ENCODE measurements at regions of chr17 and their contacts with region 1.

Region 1: DNA sequence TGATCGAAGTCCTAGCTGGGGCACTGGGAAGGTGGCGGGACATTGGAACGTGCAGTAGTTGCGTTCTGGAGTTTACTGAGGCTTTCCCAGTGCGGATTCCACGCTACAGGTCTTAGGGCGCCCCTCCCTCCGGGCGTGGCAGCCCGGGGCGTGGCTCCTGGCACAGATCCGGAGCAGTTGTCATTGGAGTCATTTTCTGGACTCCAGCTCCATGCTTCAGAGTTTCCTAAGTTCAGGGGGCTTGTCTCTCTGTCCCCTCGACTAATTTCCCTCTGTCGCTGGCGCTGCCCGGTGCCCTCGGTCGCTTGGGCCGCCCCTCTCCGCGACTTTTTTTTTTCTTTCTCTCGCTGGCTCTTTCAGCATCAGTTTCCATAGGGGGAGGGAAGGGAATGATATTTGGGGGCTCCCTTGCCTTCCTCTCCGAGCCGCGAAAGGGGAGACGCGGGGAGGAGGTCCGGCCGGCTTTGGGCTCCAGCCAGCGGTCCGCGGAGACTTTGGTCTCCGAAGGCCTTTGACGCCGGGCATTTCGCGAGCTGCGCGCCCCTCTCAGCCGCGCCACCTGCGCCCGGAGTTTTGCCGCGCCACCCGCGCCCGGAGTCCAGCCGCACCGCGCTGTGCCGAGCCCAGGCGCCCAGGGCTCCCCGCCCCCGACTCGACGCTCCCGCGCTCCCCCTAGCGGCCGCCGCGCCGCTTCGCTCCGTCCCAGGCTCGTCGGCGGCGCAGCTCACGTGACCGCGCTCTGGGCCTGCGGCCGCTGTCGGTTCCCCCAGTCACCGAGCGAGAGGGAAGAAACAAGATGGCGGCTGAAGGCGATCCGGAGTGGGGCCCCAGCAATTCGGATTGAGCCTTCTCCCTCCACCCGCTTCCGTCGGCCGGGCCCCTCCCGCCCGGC is at the start of gene BPTF:
- DNase-seq: peak; percentile 96
- ATAC-seq: peak; percentile 77
- H3K4me3 ChIP-seq: peak within 1 kb of the TSS; percentile 81 to 99 (median 82)
- H3K4me3 Mint-ChIP-seq: peak within 1 kb of the TSS; percentile 99
- H3K27ac ChIP-seq: peak within 1 kb of the TSS; percentile 80 to 89
- H3K27ac Mint-ChIP-seq: peak within 1 kb of the TSS; percentile 99
- H3K4me1 ChIP-seq: peaks cover 50 to 61% of the 10 kb centered on the region in 2 donors
- H3K4me1 Mint-ChIP-seq: peaks cover 58% of the 10 kb centered on the region
- H3K27me3 ChIP-seq: no peaks in the 10 kb centered on the region
- H3K27me3 Mint-ChIP-seq: no peaks in the 10 kb centered on the region
- CTCF ChIP-seq: peak; percentile 88
- total RNA-seq, gene BPTF: 376 and 390 TPM in 2 replicates

Region 2: GRCh38 chr17:67717624-67718329 is 107.2 kb before region 1 on chr17 and contains the start of gene NOL11:
- CTCF ChIA-PET with region 1: no interaction called
- POLR2A ChIA-PET with region 1: interaction called, 7 read pairs
- intact Hi-C with region 1: loop called (anchors 1 kb)
- DNase-seq: peak; percentile 100
- ATAC-seq: peak; percentile 95
- H3K4me3 ChIP-seq: peak within 1 kb of the TSS; percentile 70 to 97 (median 91)
- H3K4me3 Mint-ChIP-seq: peak within 1 kb of the TSS; percentile 98
- H3K27ac ChIP-seq: peak within 1 kb of the TSS; percentile 88 to 97
- H3K27ac Mint-ChIP-seq: peak within 1 kb of the TSS; percentile 97
- H3K4me1 ChIP-seq: peaks cover 18 to 21% of the 10 kb centered on the region in 2 donors
- H3K4me1 Mint-ChIP-seq: peaks cover 20% of the 10 kb centered on the region
- H3K27me3 ChIP-seq: no peaks in the 10 kb centered on the region
- H3K27me3 Mint-ChIP-seq: no peaks in the 10 kb centered on the region
- CTCF ChIP-seq: peak; percentile 86
- total RNA-seq, gene NOL11: 59.1 and 59.9 TPM in 2 replicates

Region 3: DNA sequence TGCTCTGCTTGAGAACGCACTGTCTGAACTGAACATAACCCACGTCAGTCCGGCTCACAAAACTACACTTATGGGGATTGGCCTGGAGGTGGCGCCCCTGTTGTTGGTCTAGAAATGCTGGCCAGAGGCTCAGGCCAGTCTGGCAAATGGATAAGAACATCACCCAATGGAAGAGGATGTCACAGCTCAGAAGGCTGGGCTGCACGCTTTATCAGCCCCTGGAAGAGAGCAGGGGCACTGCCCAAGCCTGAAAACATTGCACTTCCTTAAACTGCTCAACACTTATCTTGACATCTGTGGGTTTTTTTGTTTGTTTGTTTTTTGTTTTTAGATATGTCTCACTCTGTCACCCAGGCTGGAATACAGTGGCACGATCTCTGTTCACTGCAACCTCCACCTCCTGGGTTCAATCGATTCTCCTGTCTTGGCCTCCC is 24.5 kb before region 1 on chr17:
- CTCF ChIA-PET with region 1: interaction called, 103 read pairs
- POLR2A ChIA-PET with region 1: interaction called, 25 read pairs
- intact Hi-C with region 1: loop called (anchors 1 kb)
- DNase-seq: peak; percentile 87
- ATAC-seq: peak; percentile 94
- H3K4me3 ChIP-seq: no peak overlapping the region
- H3K4me3 Mint-ChIP-seq: peak overlapping the region; percentile 52
- H3K27ac ChIP-seq: no peak overlapping the region
- H3K27ac Mint-ChIP-seq: peak overlapping the region; percentile 80
- H3K4me1 ChIP-seq: peaks cover 9 to 11% of the 10 kb centered on the region in 2 donors
- H3K4me1 Mint-ChIP-seq: peaks cover 22% of the 10 kb centered on the region
- H3K27me3 ChIP-seq: no peaks in the 10 kb centered on the region
- H3K27me3 Mint-ChIP-seq: peaks cover 3% of the 10 kb centered on the region
- CTCF ChIP-seq: peak; percentile 73

Region 4: DNA sequence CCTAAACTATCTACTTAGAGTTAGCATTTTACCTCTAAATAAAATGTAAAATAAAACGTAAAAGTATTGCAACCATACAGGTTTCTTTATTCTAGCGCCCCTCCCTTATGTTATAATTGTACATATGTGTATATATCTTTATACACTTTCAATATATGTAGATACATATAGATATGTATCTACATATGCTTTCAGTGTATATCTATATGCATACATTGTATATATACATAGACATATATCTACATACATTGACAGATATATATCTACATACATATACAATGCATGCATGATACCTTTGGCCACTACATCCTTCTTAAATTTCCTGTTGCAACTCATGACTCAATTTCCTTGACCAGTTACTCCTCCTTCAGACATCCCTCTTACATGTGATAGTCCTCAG is 17.0 kb after region 1 on chr17:
- CTCF ChIA-PET with region 1: interaction called, 4 read pairs
- POLR2A ChIA-PET with region 1: interaction called, 4 read pairs
- intact Hi-C with region 1: loop called (anchors 2 kb)
- DNase-seq: no peak
- ATAC-seq: no peak
- H3K4me3 ChIP-seq: no peak overlapping the region
- H3K4me3 Mint-ChIP-seq: no peak overlapping the region
- H3K27ac ChIP-seq: no peak overlapping the region
- H3K27ac Mint-ChIP-seq: no peak overlapping the region
- H3K4me1 ChIP-seq: peaks cover 16 to 19% of the 10 kb centered on the region in 2 donors
- H3K4me1 Mint-ChIP-seq: peaks cover 46% of the 10 kb centered on the region
- H3K27me3 ChIP-seq: no peaks in the 10 kb centered on the region
- H3K27me3 Mint-ChIP-seq: no peaks in the 10 kb centered on the region
- CTCF ChIP-seq: no peak

Region 5: DNA sequence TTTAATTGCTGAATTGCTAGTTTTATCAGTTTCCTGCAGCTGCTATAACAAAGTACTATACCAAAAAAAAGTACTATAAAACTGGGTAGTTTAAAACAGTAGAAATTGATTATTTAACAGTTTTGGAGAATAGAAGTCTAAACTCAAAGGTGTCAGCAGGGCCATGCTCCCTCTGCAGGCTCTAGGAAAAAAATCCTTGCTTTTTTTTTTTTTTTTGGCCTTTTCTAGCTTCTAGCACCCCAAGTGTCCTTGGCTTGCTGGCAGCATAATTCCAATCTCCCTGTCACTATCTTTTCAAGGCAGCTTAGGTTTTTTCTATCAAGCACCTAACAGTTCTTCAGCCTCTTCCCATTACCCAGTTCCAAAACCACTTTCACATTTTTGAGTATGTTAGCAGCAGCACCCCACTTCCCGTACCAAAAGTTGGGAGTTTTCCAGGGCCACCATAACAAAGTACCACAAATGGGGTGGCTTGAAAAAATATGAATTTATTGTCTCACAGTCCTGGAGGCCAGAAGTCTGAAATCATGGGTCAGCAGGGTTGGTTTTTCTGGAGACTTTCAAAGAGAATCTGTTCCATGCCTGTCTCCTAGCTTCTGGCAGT is 37.7 kb after region 1 on chr17:
- CTCF ChIA-PET with region 1: no interaction called
- POLR2A ChIA-PET with region 1: interaction called, 4 read pairs
- intact Hi-C with region 1: loop called (anchors 5 kb)
- DNase-seq: peak; percentile 23
- ATAC-seq: no peak
- H3K4me3 ChIP-seq: no peak overlapping the region
- H3K4me3 Mint-ChIP-seq: no peak overlapping the region
- H3K27ac ChIP-seq: peak overlapping the region in 1 of 2 donors; percentile 15
- H3K27ac Mint-ChIP-seq: no peak overlapping the region
- H3K4me1 ChIP-seq: peaks cover 3 to 5% of the 10 kb centered on the region in 2 donors
- H3K4me1 Mint-ChIP-seq: peaks cover 55% of the 10 kb centered on the region
- H3K27me3 ChIP-seq: no peaks in the 10 kb centered on the region
- H3K27me3 Mint-ChIP-seq: no peaks in the 10 kb centered on the region
- CTCF ChIP-seq: no peak

Region 6: GRCh38 chr17:67944035-67944434 is 119.1 kb after region 1 on chr17:
- CTCF ChIA-PET with region 1: no interaction called
- POLR2A ChIA-PET with region 1: no interaction called
- intact Hi-C with region 1: no loop called
- DNase-seq: no peak
- ATAC-seq: no peak
- H3K4me3 ChIP-seq: no peak overlapping the region
- H3K4me3 Mint-ChIP-seq: no peak overlapping the region
- H3K27ac ChIP-seq: no peak overlapping the region
- H3K27ac Mint-ChIP-seq: no peak overlapping the region
- H3K4me1 ChIP-seq: no peaks in the 10 kb centered on the region
- H3K4me1 Mint-ChIP-seq: no peaks in the 10 kb centered on the region
- H3K27me3 ChIP-seq: no peaks in the 10 kb centered on the region
- H3K27me3 Mint-ChIP-seq: no peaks in the 10 kb centered on the region
- CTCF ChIP-seq: no peak

Region 7: GRCh38 chr17:68497885-68498319 is 672.9 kb after region 1 on chr17:
- CTCF ChIA-PET with region 1: no interaction called
- POLR2A ChIA-PET with region 1: interaction called, 12 read pairs
- intact Hi-C with region 1: no loop called
- DNase-seq: peak; percentile 87
- ATAC-seq: peak; percentile 91
- H3K4me3 ChIP-seq: peak overlapping the region in 4 of 5 experiments; percentile 18 to 52 (median 36)
- H3K4me3 Mint-ChIP-seq: peak overlapping the region; percentile 57
- H3K27ac ChIP-seq: peak overlapping the region; percentile 71 to 81
- H3K27ac Mint-ChIP-seq: peak overlapping the region; percentile 94
- H3K4me1 ChIP-seq: peaks cover 22 to 25% of the 10 kb centered on the region in 2 donors
- H3K4me1 Mint-ChIP-seq: peaks cover 26% of the 10 kb centered on the region
- H3K27me3 ChIP-seq: no peaks in the 10 kb centered on the region
- H3K27me3 Mint-ChIP-seq: no peaks in the 10 kb centered on the region
- CTCF ChIP-seq: no peak

Region 8: DNA sequence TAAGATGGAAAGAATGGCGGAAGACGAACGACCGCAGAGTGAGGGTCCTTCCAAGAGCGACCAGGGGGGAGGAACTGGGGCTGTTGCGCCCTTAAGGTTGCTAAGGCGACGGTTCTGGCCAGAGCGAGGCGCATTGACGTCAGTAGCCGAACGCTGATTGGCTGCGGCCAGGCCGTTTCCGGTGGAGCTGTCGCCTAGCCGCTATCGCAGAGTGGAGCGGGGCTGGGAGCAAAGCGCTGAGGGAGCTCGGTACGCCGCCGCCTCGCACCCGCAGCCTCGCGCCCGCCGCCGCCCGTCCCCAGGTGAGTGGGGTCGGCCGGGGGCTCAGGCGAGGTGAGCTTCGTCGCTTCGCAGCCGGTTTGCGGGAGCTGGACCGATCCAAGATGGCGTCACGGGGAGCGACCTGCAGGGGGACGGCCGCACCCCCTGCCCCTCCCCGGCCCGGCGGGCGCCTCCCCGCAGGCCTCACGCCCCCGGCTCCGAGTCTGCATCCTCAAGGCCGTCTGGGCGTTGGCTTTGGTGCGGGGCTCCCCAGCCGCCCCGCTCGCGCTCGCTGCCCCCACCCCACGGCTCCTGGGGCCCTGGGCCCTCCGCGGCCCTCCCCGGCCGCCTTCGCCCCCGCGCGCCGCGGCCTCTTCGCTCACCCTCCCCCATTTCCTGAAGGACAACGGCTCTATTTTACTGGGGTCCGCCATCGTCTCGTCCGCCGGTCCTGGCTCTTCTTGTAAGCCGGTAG is 687.4 kb after region 1 on chr17 and contains the start of gene PRKAR1A:
- CTCF ChIA-PET with region 1: no interaction called
- POLR2A ChIA-PET with region 1: no interaction called
- intact Hi-C with region 1: loop called (anchors 5 kb)
- DNase-seq: peak; percentile 98
- ATAC-seq: peak; percentile 75
- H3K4me3 ChIP-seq: peak within 1 kb of the TSS; percentile 62 to 99 (median 85)
- H3K4me3 Mint-ChIP-seq: peak within 1 kb of the TSS; percentile 100
- H3K27ac ChIP-seq: peak within 1 kb of the TSS; percentile 99
- H3K27ac Mint-ChIP-seq: peak within 1 kb of the TSS; percentile 100
- H3K4me1 ChIP-seq: peaks cover 25 to 28% of the 10 kb centered on the region in 2 donors
- H3K4me1 Mint-ChIP-seq: peaks cover 42% of the 10 kb centered on the region
- H3K27me3 ChIP-seq: no peaks in the 10 kb centered on the region
- H3K27me3 Mint-ChIP-seq: no peaks in the 10 kb centered on the region
- CTCF ChIP-seq: no peak
- total RNA-seq, gene PRKAR1A: 296 and 297 TPM in 2 replicates

Measured in B cell (primary cell).